ENCODE measurements at regions of chr13 and their contacts with region 1.

Region 1: DNA sequence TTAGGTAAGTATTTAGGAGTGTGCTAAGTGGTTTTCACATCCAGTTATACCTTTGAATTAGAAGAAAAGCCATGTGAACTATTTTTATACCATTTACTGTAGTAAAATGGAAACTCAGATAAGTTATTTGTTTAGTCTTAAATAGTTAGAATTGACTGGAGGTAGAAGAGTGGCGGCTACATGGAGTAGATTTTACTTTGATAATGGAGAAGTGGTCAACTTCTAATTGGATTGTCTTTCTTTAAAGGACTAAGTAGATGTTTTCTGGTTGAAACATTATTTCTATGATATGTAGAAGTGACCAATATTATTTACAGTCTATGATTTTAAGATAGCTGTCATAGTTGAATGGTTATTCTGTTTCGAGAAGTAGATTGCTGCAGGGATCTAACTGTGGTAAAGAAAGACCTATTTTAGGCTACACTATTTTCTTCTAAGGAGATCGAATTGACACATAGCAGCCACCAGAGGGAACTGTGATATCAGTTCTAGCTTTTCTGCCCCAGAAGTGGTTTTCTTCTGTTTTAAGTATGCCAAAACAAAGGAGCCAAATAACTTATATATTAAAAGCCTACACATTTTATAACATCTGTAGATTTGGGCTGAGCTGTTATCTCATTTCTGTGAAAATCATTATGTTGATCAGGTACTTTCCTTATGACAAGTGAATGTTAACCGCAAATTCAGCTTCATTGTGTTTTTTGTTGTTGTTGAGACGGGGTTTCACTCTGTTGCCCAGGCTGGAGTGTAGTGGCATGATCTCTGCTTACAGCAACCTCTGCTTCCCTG is 26.1 kb downstream of the ZMYM2 start:
- DNase-seq: no peak
- H3K4me3 ChIP-seq: no peak overlapping the region
- H3K27me3 ChIP-seq: no peaks in the 10 kb centered on the region
- CTCF ChIP-seq: peak; percentile 78

Region 2: GRCh38 chr13:19998960-19999359 is 14.3 kb after region 1 on chr13:
- CTCF ChIA-PET with region 1: interaction called, 35 read pairs
- POLR2A ChIA-PET with region 1: no interaction called
- DNase-seq: no peak
- H3K4me3 ChIP-seq: no peak overlapping the region
- H3K27me3 ChIP-seq: no peaks in the 10 kb centered on the region
- CTCF ChIP-seq: no peak

Region 3: DNA sequence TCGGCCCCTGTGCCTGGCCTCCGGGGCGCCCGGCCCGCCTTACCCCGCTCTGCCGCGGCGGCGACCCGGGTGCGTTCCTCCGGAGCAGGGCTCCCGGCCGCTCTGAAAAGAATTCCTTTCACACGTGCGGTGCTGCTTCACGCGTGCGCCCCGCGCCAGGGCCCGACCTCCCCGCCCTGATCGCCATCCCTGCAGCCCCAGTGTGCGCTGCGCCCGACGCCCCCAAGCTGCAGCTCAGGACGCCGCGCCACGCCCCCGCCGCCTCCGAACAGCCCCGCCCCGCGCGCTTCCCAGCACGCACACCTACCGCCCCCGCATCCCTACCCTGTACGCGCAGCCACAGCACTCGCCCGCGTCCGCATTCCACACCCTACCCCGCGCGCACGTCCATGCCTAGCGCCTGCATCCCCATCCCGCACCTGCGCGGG is 176.2 kb after region 1 on chr13 and contains the start of gene GJA3:
- CTCF ChIA-PET with region 1: interaction called, 11 read pairs
- POLR2A ChIA-PET with region 1: no interaction called
- DNase-seq: no peak
- H3K4me3 ChIP-seq: peak within 1 kb of the TSS; percentile 40
- H3K27me3 ChIP-seq: peaks cover 3% of the 10 kb centered on the region
- CTCF ChIP-seq: no peak
- polyA plus RNA-seq, gene GJA3: 0.05 and 0.13 TPM in 2 replicates

Region 4: GRCh38 chr13:20209948-20210347 is 225.3 kb after region 1 on chr13:
- CTCF ChIA-PET with region 1: no interaction called
- POLR2A ChIA-PET with region 1: no interaction called
- DNase-seq: no peak
- H3K4me3 ChIP-seq: no peak overlapping the region
- H3K27me3 ChIP-seq: peaks cover 9% of the 10 kb centered on the region
- CTCF ChIP-seq: no peak

Region 5: GRCh38 chr13:20320885-20321284 is 336.3 kb after region 1 on chr13:
- CTCF ChIA-PET with region 1: no interaction called
- POLR2A ChIA-PET with region 1: no interaction called
- DNase-seq: no peak
- H3K4me3 ChIP-seq: no peak overlapping the region
- H3K27me3 ChIP-seq: 0 out of 2 replicates have a peak, but pooled peaks cover 2% of the 10 kb centered on the region
- CTCF ChIP-seq: no peak